Prostate gland (tissue), 2 donors: ENCODE measurements at regions of chr2 and their contacts with region 1.

Region 1: DNA sequence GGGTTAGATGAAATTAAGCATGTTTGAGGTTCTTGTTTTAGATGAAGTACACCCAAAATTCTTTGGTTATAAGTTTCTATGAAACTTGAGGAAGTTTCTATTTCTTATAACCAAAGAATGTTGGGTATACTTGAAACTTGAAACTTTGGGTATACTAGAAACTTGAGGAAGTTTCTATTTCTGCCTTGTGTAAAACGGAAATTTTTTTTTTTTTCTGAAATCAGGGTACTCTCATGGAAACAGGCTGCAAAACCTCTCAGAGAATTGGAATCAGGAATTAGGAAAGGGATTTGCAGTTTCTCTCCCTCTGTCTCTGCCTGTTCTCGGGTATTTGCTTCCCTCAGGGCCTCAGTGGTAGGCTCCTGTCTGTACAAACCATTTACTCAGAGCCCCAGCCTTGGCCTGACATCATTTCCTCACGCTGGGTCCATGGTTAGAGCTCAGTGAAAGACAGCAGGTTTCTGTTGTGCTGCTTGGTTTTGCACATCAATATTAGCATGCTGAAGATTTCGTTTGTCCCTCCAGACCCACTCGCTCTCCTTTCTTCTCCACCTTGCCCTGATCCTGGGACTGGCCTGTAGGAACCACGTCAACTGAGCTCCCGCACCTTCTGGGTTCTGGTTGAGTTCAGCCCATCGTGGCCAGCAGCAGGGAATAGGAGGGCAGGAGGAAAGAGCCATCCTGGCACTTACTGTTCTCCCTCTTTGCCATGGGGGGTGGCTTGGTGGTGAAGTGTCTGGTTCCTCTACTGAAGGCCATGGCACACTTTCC is 106.4 kb downstream of the POLR1A start:
- DNase-seq: no peak
- H3K4me3 ChIP-seq: no peak overlapping the region
- H3K27ac ChIP-seq: peak overlapping the region in 1 of 2 donors; percentile 39
- H3K4me1 ChIP-seq: no peaks in the 10 kb centered on the region
- H3K27me3 ChIP-seq: no peaks in the 10 kb centered on the region
- CTCF ChIP-seq: no peak
- POLR2A ChIP-seq: no peak

Region 2: DNA sequence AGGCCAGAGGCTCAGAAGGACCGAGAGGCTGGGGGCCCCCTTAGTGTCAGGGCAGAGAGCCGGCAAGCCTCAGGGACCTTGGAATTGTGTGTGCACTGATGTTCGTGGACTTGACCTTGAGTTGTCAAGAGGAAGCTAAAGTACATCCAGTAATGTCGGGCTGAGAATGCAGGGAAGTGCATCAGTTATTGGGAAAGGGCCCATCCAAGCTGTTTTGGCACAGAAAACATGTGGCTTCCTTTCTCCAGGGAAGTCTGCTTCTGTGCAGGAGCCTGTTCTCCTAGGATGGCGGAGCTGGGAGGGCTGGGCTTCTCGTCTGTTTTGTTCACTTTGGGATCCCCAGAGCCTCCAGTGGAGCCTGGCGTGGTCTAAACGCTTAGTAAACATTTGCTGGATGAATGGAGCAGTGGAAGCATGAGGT is 221.8 kb before region 1 on chr2:
- intact Hi-C with region 1: no loop called
- DNase-seq: no peak
- H3K4me3 ChIP-seq: no peak overlapping the region
- H3K27ac ChIP-seq: no peak overlapping the region
- H3K4me1 ChIP-seq: no peaks in the 10 kb centered on the region
- H3K27me3 ChIP-seq: no peaks in the 10 kb centered on the region
- CTCF ChIP-seq: no peak
- POLR2A ChIP-seq: no peak

Region 3: DNA sequence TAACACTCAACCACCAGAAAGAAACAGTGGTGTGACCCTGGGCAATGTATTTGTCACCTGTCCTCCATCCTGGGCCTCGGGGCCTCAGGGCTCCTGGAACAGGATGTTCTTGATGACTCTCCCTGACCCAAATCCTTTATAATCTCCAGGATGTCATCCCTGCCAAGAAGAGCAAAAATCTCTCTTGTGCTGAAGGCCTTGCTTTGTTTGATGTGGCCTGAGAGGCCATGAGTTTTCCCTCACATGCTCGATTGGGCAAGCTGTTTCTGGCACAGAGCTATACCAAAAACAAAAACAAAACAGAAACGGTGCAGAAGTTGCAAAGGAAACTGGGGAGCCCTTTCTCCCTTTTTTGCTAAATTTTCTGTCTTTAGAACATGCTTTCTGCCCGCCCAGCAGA is 74.7 kb before region 1 on chr2:
- intact Hi-C with region 1: loop called (anchors 5 kb)
- DNase-seq: peak; percentile 48
- H3K4me3 ChIP-seq: no peak overlapping the region
- H3K27ac ChIP-seq: peak overlapping the region in 1 of 2 donors; percentile 60
- H3K4me1 ChIP-seq: peaks cover 10% of the 10 kb centered on the region
- H3K27me3 ChIP-seq: no peaks in the 10 kb centered on the region
- CTCF ChIP-seq: no peak
- POLR2A ChIP-seq: no peak

Region 4: GRCh38 chr2:86035883-86036668 is 36.8 kb after region 1 on chr2:
- intact Hi-C with region 1: loop called (anchors 5 kb)
- DNase-seq: peak; percentile 76
- H3K4me3 ChIP-seq: no peak overlapping the region
- H3K27ac ChIP-seq: peak overlapping the region; percentile 69 to 73
- H3K4me1 ChIP-seq: no peaks in the 10 kb centered on the region
- H3K27me3 ChIP-seq: no peaks in the 10 kb centered on the region
- CTCF ChIP-seq: peak in 2 of 4 experiments; percentile 53 to 57
- POLR2A ChIP-seq: no peak